ENCODE measurements at regions of chr2 and their contacts with region 1.

Region 1: GRCh38 chr2:73176881-73177644 is 25.3 kb upstream of the NOTO start:
- DNase-seq: peak; percentile 95
- ATAC-seq: peak; percentile 82
- H3K4me3 Mint-ChIP-seq: peak overlapping the region; percentile 79
- H3K27ac Mint-ChIP-seq: peak overlapping the region; percentile 71
- H3K4me1 Mint-ChIP-seq: peaks cover 26% of the 10 kb centered on the region
- H3K27me3 Mint-ChIP-seq: peaks cover 28% of the 10 kb centered on the region
- CTCF ChIP-seq: peak; percentile 99

Region 2: DNA sequence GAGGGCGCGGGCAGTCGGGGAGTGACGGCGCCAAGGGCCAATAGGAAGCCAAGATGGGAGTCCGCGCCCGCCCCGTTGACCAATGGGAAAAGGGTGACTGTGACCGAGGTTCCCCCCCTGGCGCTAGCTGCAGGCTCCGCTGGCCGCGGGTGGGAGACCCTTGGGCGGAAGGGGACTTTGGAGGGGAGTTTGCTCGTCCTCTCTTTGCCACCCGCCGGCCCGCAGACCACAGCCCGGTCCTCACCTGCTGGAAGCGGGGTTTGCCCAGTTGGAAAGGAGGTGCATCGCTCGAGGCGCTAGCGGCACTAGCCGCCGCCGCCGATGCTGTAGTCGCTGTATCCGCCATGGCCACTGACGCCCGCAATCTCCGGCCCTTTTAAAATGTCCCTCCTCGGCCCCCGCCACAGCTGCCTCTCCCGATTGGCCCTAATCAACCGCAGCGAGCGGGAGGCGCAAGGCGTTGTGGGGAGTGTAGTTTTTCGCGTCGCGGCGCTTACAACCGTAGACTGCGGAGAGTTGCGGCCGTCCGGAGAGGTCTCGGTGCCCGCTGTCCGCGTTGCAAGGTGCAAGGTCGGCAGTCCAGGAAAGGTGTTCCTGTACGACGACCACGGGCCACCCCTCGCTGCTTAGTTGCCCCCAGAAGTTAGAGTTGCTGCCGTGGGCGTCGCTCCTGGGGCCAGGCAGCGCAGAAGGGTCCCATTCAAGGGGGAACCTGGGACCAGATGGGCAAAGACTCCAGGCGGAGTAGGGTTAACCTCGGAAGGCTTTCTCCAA is 105.5 kb before region 1 on chr2 and contains the start of gene SFXN5:
- CTCF ChIA-PET with region 1: interaction called, 19 read pairs
- POLR2A ChIA-PET with region 1: interaction called, 3 read pairs
- intact Hi-C with region 1: no loop called
- DNase-seq: peak; percentile 97
- ATAC-seq: peak; percentile 90
- H3K4me3 Mint-ChIP-seq: peak within 1 kb of the TSS; percentile 82
- H3K27ac Mint-ChIP-seq: peak within 1 kb of the TSS; percentile 94
- H3K4me1 Mint-ChIP-seq: peaks cover 25% of the 10 kb centered on the region
- H3K27me3 Mint-ChIP-seq: no peaks in the 10 kb centered on the region
- CTCF ChIP-seq: no peak
- total RNA-seq, gene SFXN5: 7.4 to 9.6 TPM

Region 3: GRCh38 chr2:73091164-73091563 is 85.9 kb before region 1 on chr2:
- CTCF ChIA-PET with region 1: interaction called, 67 read pairs
- POLR2A ChIA-PET with region 1: interaction called, 3 read pairs
- intact Hi-C with region 1: no loop called
- DNase-seq: no peak
- ATAC-seq: no peak
- H3K4me3 Mint-ChIP-seq: no peak overlapping the region
- H3K27ac Mint-ChIP-seq: no peak overlapping the region
- H3K4me1 Mint-ChIP-seq: no peaks in the 10 kb centered on the region
- H3K27me3 Mint-ChIP-seq: no peaks in the 10 kb centered on the region
- CTCF ChIP-seq: no peak

Region 4: GRCh38 chr2:73163483-73164367 is 13.3 kb before region 1 on chr2:
- CTCF ChIA-PET with region 1: interaction called, 21 read pairs
- POLR2A ChIA-PET with region 1: no interaction called
- intact Hi-C with region 1: no loop called
- DNase-seq: peak; percentile 77
- ATAC-seq: peak; percentile 94
- H3K4me3 Mint-ChIP-seq: no peak overlapping the region
- H3K27ac Mint-ChIP-seq: no peak overlapping the region
- H3K4me1 Mint-ChIP-seq: no peaks in the 10 kb centered on the region
- H3K27me3 Mint-ChIP-seq: peaks cover 1% of the 10 kb centered on the region
- CTCF ChIP-seq: peak; percentile 82

Region 5: DNA sequence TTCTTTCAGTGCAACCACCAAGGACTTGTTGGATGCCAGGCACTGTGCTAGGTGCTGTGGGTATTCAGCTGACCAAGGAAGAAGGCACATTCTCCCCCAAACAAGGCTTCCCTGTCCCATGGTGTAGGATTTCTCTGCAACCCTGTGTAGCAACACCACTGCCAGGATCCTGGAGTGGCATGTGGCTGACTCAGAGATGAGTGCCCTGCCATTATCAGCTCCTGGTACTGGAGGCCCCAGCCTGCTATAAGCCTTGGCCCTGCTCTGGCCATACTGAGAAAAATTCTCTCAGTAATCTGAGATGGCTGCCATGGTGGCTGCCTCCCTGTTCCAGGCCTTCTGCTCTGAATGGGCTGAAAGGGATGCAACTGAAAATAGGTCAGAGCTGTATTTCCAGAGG is 41.2 kb after region 1 on chr2:
- CTCF ChIA-PET with region 1: interaction called, 79 read pairs
- POLR2A ChIA-PET with region 1: interaction called, 9 read pairs
- intact Hi-C with region 1: no loop called
- DNase-seq: no peak
- ATAC-seq: no peak
- H3K4me3 Mint-ChIP-seq: no peak overlapping the region
- H3K27ac Mint-ChIP-seq: peak overlapping the region; percentile 11
- H3K4me1 Mint-ChIP-seq: peaks cover 25% of the 10 kb centered on the region
- H3K27me3 Mint-ChIP-seq: no peaks in the 10 kb centered on the region
- CTCF ChIP-seq: no peak

Region 6: DNA sequence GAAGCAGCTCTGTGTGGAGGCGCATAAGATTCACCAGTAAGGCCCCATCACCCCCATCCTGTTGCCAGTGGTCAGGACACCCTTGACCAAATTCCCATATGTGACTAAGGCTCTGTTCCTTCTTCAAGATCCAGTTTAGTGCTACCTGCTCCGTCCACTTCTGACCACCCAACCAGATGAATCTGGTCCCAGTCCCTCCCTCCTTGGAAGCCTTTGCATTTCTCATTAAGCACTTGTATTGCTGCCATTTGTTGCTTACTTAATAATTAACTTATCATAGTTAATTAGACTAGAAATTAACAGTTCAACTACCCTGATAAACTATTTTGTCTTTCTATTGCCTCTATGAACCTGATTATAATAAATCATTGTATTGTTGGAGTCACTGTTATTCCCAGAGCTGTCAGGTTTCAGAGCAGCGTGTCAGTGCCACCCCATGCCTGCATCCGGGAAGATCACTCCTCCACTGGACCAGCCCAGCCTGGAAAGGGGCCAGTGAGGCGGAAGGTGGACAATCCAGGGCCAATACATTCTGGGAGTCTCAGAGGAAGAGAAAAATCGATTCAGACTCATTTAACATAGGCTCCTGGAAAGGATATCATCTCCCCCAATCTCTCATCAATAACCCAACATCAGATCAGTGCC is 474.6 kb after region 1 on chr2:
- CTCF ChIA-PET with region 1: no interaction called
- POLR2A ChIA-PET with region 1: no interaction called
- intact Hi-C with region 1: no loop called
- DNase-seq: no peak
- ATAC-seq: no peak
- H3K4me3 Mint-ChIP-seq: no peak overlapping the region
- H3K27ac Mint-ChIP-seq: no peak overlapping the region
- H3K4me1 Mint-ChIP-seq: no peaks in the 10 kb centered on the region
- H3K27me3 Mint-ChIP-seq: peaks cover 4% of the 10 kb centered on the region
- CTCF ChIP-seq: no peak

Measured in activated CD8-positive, alpha-beta T cell treated with anti-CD3 and anti-CD28 coated beads for 36 hours (primary cell).